Naive thymus-derived CD4-positive, alpha-beta T cell (primary cell): ENCODE measurements at regions of chr18 and their contacts with region 1.

Region 1: DNA sequence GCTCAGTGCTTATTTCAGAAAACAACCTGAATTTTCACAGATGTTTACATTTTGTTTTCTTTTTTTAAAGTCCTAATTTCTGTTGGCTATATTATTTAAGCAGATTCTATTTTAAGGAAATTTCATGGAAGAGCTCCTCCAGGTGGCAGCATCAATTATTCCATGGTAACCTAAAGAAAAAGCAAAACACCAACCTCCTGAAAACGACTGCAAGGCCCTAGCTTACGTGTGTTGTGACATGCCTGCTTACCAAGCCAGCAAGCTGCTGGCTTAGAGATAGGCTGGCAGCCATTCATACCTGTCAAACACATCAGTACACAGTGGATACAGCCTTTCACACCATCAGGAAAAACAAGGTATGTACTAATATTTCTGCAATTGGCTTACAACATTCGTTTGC is 64.9 kb downstream of the LPIN2 start:
- DNase-seq: no peak
- ATAC-seq: no peak
- H3K4me3 ChIP-seq: no peak overlapping the region
- H3K4me3 Mint-ChIP-seq: no peak overlapping the region
- H3K27ac ChIP-seq: no peak overlapping the region
- H3K27ac Mint-ChIP-seq: peak overlapping the region in 5 of 9 donors; percentile 19 to 74 (median 35)
- H3K4me1 ChIP-seq: peaks cover 3 to 24% of the 10 kb centered on the region in 2 donors
- H3K4me1 Mint-ChIP-seq: peaks cover 16 to 81% (median 66%) of the 10 kb centered on the region in 7 donors
- H3K27me3 ChIP-seq: no peaks in the 10 kb centered on the region
- H3K27me3 Mint-ChIP-seq: no peaks in the 10 kb centered on the region

Region 2: DNA sequence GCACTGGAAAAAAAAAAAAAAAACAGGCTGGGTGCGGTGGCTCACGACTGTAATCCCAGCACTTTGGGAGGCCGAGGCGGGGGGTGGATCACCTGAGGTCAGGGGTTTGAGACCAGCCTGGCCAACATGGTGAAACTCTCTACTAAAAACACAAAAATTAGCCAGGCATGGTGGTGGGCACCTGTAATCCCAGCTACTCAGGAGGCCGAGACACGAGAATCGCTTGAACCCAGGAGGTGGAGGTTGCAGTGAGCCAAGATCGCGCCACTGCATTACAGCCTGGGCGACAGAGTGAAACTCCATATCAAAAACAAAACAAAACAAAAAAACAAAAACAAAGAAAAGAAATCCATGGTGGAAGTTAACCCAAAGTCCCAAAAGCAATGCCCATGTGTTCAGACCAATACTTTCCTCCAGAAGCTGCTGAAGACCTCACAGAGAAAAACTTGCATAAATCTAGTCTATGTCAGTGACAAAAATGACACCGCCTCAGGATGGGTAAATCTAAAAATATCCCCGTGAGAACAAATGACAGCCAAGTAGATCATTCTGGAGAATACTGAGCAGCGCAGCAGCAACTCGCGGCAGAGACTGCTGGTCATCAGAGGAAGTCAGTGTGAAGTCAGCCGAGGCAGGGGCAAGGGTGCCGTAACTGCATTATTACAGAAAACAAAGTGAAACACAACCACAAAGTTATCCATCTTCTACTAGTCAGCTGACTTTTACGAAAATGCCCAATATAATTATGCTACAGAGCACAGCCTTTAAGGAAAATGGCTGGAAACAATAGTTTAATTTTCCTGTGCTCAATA is 23.9 kb after region 1 on chr18:
- CTCF ChIA-PET with region 1: interaction called, 4 read pairs
- POLR2A ChIA-PET with region 1: interaction called, 45 read pairs
- intact Hi-C with region 1: no loop called
- DNase-seq: peak in 7 of 9 donors; percentile 40 to 80 (median 62)
- ATAC-seq: peak; percentile 84
- H3K4me3 ChIP-seq: peak overlapping the region; percentile 45
- H3K4me3 Mint-ChIP-seq: peak overlapping the region; percentile 75 to 93 (median 88)
- H3K27ac ChIP-seq: peak overlapping the region; percentile 76
- H3K27ac Mint-ChIP-seq: peak overlapping the region; percentile 90 to 99 (median 96)
- H3K4me1 ChIP-seq: peaks cover 75 to 82% of the 10 kb centered on the region in 2 donors
- H3K4me1 Mint-ChIP-seq: peaks cover 63 to 97% (median 93%) of the 10 kb centered on the region in 7 donors
- H3K27me3 ChIP-seq: no peaks in the 10 kb centered on the region
- H3K27me3 Mint-ChIP-seq: no peaks in the 10 kb centered on the region

Region 3: DNA sequence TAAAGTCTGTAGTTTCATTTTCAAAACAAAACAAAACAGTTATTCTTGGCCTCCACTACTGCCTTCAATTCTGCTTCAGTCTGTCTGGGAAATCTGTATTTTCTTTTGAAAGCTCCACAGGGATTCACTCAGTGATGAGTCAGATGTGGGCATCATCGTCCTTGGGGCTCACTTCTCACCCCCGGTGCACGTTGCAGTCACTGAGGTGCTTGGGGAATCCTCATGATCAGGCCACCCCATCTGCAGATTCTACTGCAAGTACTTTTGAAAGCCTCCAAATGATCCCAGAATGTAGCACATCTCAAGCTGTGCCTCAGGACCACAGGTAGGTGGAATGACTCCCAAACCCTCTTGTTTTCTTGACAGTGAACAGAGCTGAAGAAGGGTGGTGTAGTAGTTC is 30.6 kb after region 1 on chr18:
- CTCF ChIA-PET with region 1: interaction called, 9 read pairs
- POLR2A ChIA-PET with region 1: interaction called, 45 read pairs
- intact Hi-C with region 1: no loop called
- DNase-seq: no peak
- ATAC-seq: no peak
- H3K4me3 ChIP-seq: peak overlapping the region; percentile 69
- H3K4me3 Mint-ChIP-seq: peak overlapping the region; percentile 34 to 94 (median 84)
- H3K27ac ChIP-seq: peak overlapping the region; percentile 76
- H3K27ac Mint-ChIP-seq: peak overlapping the region; percentile 83 to 98 (median 91)
- H3K4me1 ChIP-seq: peaks cover 48 to 57% of the 10 kb centered on the region in 2 donors
- H3K4me1 Mint-ChIP-seq: peaks cover 57 to 85% (median 76%) of the 10 kb centered on the region in 7 donors
- H3K27me3 ChIP-seq: no peaks in the 10 kb centered on the region
- H3K27me3 Mint-ChIP-seq: no peaks in the 10 kb centered on the region

Region 4: DNA sequence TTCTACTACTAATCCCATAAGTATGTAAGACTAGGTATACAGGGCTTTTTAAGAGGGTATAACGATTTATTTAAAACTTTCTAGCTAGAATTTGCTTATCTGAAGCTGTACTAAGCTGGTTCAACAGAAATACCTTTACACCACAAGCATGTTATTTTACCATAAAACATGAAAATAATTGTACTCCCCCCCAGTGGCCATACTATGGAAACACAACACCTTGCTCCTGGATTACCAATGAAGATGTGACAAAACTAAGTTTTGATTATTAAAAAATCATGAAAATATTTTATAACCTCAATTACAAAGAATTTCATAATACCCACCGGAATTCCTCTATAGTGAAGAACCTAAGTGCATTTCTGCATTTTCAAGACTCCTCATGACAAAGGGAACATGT is 37.6 kb after region 1 on chr18:
- CTCF ChIA-PET with region 1: interaction called, 49 read pairs
- POLR2A ChIA-PET with region 1: interaction called, 45 read pairs
- intact Hi-C with region 1: loop called in 1 of 2 experiments (anchors 5 kb)
- DNase-seq: peak in 7 of 9 donors; percentile 56 to 75 (median 66)
- ATAC-seq: peak; percentile 79
- H3K4me3 ChIP-seq: no peak overlapping the region
- H3K4me3 Mint-ChIP-seq: peak overlapping the region in 1 of 10 donors; percentile 27
- H3K27ac ChIP-seq: no peak overlapping the region
- H3K27ac Mint-ChIP-seq: peak overlapping the region in 7 of 9 donors; percentile 0 to 98 (median 67)
- H3K4me1 ChIP-seq: peaks cover 19 to 41% of the 10 kb centered on the region in 2 donors
- H3K4me1 Mint-ChIP-seq: peaks cover 34 to 80% (median 73%) of the 10 kb centered on the region in 7 donors
- H3K27me3 ChIP-seq: no peaks in the 10 kb centered on the region
- H3K27me3 Mint-ChIP-seq: no peaks in the 10 kb centered on the region

Region 5: DNA sequence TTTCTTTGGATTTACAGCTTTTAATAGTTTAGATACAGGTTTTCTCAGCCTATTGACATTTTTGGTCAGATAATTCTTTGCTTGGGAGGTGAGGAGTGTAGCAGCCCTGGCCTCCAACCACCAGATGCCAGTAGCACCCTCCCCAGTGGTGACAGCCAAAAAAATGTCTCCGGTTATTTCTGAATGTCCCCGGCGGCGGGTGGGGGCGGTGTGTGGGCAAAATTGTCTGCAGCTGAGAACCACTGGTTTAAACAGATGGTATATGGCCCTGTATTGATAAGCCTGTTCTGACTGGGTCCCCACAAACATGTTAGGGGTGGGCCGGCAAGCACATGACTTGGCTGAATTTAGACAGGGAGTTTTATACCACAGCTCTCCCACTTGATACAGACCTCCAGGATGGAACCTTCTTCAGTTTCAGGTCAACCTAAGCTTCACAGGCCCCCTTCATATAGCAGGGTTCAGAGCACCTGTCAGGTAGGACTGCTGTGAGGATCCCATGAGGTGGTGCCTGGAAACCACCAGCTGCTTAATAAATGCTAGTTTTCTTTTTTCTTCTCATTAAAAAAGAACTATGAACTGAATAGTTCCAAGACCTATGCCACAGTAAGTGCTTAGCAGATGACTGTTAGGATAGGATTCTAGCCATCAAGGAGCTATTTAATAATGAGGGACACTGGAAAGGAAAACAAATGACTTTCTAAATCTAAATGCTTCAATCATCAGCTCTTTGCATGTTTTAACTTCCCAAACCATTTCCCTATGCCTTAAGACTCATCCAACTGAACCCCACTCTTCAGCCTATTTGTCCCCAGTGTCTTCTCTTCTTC is 46.8 kb after region 1 on chr18:
- CTCF ChIA-PET with region 1: interaction called, 20 read pairs
- POLR2A ChIA-PET with region 1: interaction called, 3 read pairs
- intact Hi-C with region 1: no loop called
- DNase-seq: peak; percentile 57 to 83 (median 77)
- ATAC-seq: peak; percentile 92
- H3K4me3 ChIP-seq: peak overlapping the region; percentile 35
- H3K4me3 Mint-ChIP-seq: peak overlapping the region; percentile 41 to 80 (median 68)
- H3K27ac ChIP-seq: peak overlapping the region; percentile 62
- H3K27ac Mint-ChIP-seq: peak overlapping the region; percentile 54 to 91 (median 84)
- H3K4me1 ChIP-seq: peaks cover 38 to 47% of the 10 kb centered on the region in 2 donors
- H3K4me1 Mint-ChIP-seq: peaks cover 48 to 87% (median 83%) of the 10 kb centered on the region in 7 donors
- H3K27me3 ChIP-seq: no peaks in the 10 kb centered on the region
- H3K27me3 Mint-ChIP-seq: no peaks in the 10 kb centered on the region